GM12878 (cell line): ENCODE measurements at regions of chr12 and their contacts with region 1.

Region 1: DNA sequence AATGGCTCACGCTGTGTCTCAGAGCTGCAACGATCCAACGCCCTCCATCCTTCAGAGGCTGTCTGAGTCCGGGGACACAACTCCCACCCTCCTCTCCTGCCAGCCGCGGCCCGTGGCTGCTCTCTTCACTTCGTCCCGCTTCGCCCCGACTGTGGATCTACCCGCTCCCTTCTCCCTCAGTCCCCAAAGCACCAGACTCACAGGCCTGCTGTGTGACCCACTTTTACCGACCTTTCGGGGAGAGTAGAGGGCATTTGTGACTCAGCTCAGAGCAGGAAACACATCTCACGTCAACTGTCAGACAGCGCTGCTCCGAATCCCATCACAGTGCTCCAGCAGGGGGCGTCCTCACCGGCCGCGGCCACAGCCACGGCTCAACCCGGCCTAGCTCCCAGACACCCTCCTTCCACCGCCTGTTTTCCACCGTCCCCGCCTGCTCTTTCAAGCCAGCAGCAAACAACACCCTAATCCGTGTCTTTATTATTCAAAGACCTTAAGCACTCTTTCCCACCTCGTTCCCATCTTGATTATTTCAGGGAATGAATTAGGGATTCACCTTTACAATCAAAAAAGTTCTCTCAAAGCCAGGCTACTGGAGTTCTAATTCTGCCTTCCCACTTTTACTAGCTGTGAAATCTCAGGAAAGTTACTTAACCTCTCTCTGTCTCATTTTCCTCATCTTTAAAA is 5.0 kb upstream of the AQP2 start:
- DNase-seq: peak; percentile 45
- ATAC-seq: peak; percentile 100
- H3K4me3 ChIP-seq: no peak overlapping the region
- H3K27ac ChIP-seq: no peak overlapping the region
- H3K4me1 ChIP-seq: no peaks in the 10 kb centered on the region
- H3K27me3 ChIP-seq: no peaks in the 10 kb centered on the region; a peak in 1 of 4 replicates
- CTCF ChIP-seq: peak; percentile 85 to 93 (median 92)
- EP300 ChIP-seq: no peak
- POLR2A ChIP-seq: no peak
- RAD21 ChIP-seq: no peak

Region 2: DNA sequence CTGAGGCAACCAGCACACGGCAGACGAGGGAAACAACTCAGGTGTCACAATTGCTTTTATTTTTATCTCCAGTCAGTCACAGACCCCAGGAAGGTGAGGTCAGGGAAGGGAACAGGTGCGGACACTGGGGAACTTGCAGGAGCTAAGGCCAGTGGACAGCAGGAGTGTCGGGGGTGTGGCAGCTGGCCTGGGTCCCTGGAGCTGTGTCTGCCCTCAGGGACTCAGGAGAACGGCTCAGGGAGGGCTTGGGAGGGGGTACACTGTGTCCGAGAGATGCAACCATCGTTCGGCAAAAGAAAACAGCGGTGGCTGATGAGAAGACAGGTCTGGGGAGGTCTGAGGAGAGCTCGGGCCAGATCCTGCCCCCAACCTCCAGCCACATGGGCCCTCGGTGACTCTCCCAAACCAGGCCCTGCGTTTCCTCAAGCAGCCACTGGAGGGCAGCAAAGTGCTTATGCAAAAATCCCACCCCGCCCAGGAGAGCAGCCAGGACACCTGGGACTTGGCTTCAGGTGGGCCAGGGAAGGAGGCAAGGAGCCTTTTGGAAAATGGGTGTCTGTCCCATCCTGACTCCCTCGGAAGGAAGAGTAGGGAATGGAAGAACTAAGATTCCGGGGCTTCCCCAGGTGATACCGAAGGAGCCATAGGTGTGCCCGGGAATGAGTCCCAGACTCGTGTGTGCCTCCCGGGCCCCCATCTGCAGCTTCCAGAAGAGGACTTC is 78.5 kb before region 1 on chr12:
- CTCF ChIA-PET with region 1: interaction called, 21 read pairs
- POLR2A ChIA-PET with region 1: no interaction called
- RAD21 ChIA-PET with region 1: interaction called, 4 read pairs
- SMC1A ChIA-PET with region 1: interaction called, 7 read pairs
- in situ Hi-C with region 1: no loop called
- intact Hi-C with region 1: no loop called
- DNase-seq: no peak
- ATAC-seq: peak; percentile 96
- H3K4me3 ChIP-seq: no peak overlapping the region
- H3K27ac ChIP-seq: no peak overlapping the region
- H3K4me1 ChIP-seq: no peaks in the 10 kb centered on the region
- H3K27me3 ChIP-seq: no peaks in the 10 kb centered on the region; a peak in 2 of 4 replicates
- CTCF ChIP-seq: peak; percentile 94 to 99 (median 99); a peak in 5 of 6 replicates
- EP300 ChIP-seq: no peak
- POLR2A ChIP-seq: no peak
- RAD21 ChIP-seq: peak; percentile 74

Region 3: GRCh38 chr12:49930515-49931288 is 14.8 kb before region 1 on chr12:
- CTCF ChIA-PET with region 1: interaction called, 30 read pairs
- POLR2A ChIA-PET with region 1: no interaction called
- RAD21 ChIA-PET with region 1: no interaction called
- SMC1A ChIA-PET with region 1: interaction called, 8 read pairs
- in situ Hi-C with region 1: no loop called
- intact Hi-C with region 1: no loop called
- DNase-seq: no peak
- ATAC-seq: no peak
- H3K4me3 ChIP-seq: no peak overlapping the region
- H3K27ac ChIP-seq: no peak overlapping the region
- H3K4me1 ChIP-seq: no peaks in the 10 kb centered on the region
- H3K27me3 ChIP-seq: peaks cover 1 to 3% of the 10 kb centered on the region in 2 experiments; a peak in 2 of 4 replicates
- CTCF ChIP-seq: no peak
- EP300 ChIP-seq: no peak
- POLR2A ChIP-seq: no peak
- RAD21 ChIP-seq: no peak

Region 4: GRCh38 chr12:50006789-50007436 is 61.4 kb after region 1 on chr12:
- CTCF ChIA-PET with region 1: interaction called, 10 read pairs
- POLR2A ChIA-PET with region 1: no interaction called
- RAD21 ChIA-PET with region 1: no interaction called
- SMC1A ChIA-PET with region 1: no interaction called
- in situ Hi-C with region 1: no loop called
- intact Hi-C with region 1: no loop called
- DNase-seq: no peak
- ATAC-seq: no peak
- H3K4me3 ChIP-seq: no peak overlapping the region
- H3K27ac ChIP-seq: no peak overlapping the region
- H3K4me1 ChIP-seq: peaks cover 10% of the 10 kb centered on the region; the same call in 1 of the 2 replicates
- H3K27me3 ChIP-seq: no peaks in the 10 kb centered on the region
- CTCF ChIP-seq: no peak
- EP300 ChIP-seq: no peak
- POLR2A ChIP-seq: no peak
- RAD21 ChIP-seq: no peak

Region 5: GRCh38 chr12:50043854-50044253 is 98.3 kb after region 1 on chr12:
- CTCF ChIA-PET with region 1: interaction called, 15 read pairs
- POLR2A ChIA-PET with region 1: no interaction called
- RAD21 ChIA-PET with region 1: interaction called, 4 read pairs
- SMC1A ChIA-PET with region 1: no interaction called
- in situ Hi-C with region 1: no loop called
- intact Hi-C with region 1: no loop called
- DNase-seq: no peak
- ATAC-seq: no peak
- H3K4me3 ChIP-seq: no peak overlapping the region
- H3K27ac ChIP-seq: no peak overlapping the region
- H3K4me1 ChIP-seq: no peaks in the 10 kb centered on the region
- H3K27me3 ChIP-seq: no peaks in the 10 kb centered on the region
- CTCF ChIP-seq: no peak
- EP300 ChIP-seq: no peak
- POLR2A ChIP-seq: no peak
- RAD21 ChIP-seq: no peak